Activated naive CD8-positive, alpha-beta T cell treated with anti-CD3 and anti-CD28 coated beads, Interleukin-2, amount 10 ng/mL, durations not matched to agents 7 days and 5 days (primary cell): ENCODE measurements at regions of chr15 and their contacts with region 1.

Region 1: GRCh38 chr15:75201609-75202250 is at the start of gene C15orf39:
- DNase-seq: peak; percentile 93
- ATAC-seq: peak; percentile 44
- H3K4me3 Mint-ChIP-seq: peak within 1 kb of the TSS; percentile 94
- H3K27ac Mint-ChIP-seq: peak within 1 kb of the TSS; percentile 85
- H3K4me1 Mint-ChIP-seq: peaks cover 45% of the 10 kb centered on the region
- H3K27me3 Mint-ChIP-seq: no peaks in the 10 kb centered on the region
- total RNA-seq, gene C15orf39: 45.6 to 45.9 TPM

Region 2: DNA sequence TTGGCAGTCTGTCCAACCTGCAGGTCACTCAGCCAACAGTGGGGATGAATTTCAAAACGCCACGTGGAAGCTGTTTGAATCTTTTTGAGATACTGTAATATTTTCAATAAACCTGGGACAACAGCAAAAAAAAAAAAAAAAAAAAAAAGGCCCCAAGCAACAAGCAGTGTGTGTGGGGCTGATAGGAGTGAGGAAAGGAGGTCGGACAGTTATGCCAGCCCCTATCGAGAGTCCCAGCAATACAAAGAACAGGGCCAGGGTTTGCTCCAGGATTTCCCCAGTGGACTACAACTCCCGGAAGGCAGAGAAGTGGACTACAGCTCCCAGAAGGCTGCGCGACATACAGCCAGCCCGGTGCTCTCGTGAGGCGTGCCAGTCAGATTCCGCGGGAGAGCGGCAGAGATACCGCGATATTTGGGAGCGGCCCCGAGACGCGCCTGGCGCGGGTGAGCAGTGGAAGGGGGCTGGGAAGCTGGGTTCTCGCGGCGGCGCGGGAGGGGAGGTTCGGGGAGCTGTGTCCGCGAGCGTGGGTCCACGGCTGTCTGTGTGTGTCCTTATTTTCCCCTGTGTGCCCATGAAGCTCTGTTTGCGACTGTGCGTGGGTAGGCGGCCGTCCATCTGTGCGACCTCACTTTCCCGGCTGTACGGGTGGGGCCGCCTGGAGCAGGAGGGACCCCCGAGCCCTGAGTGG is 178.4 kb before region 1 on chr15 and contains the start of gene PPCDC:
- POLR2A ChIA-PET with region 1: interaction called, 10 read pairs
- DNase-seq: peak; percentile 94
- ATAC-seq: peak; percentile 99
- H3K4me3 Mint-ChIP-seq: peak within 1 kb of the TSS; percentile 95
- H3K27ac Mint-ChIP-seq: peak within 1 kb of the TSS; percentile 95
- H3K4me1 Mint-ChIP-seq: peaks cover 19% of the 10 kb centered on the region
- H3K27me3 Mint-ChIP-seq: peaks cover 2% of the 10 kb centered on the region
- total RNA-seq, gene PPCDC: 16.0 to 16.7 TPM

Region 3: GRCh38 chr15:75029378-75030022 is 172.2 kb before region 1 on chr15:
- POLR2A ChIA-PET with region 1: interaction called, 13 read pairs
- DNase-seq: peak; percentile 91
- ATAC-seq: peak; percentile 85
- H3K4me3 Mint-ChIP-seq: no peak overlapping the region
- H3K27ac Mint-ChIP-seq: peak overlapping the region; percentile 57
- H3K4me1 Mint-ChIP-seq: peaks cover 37% of the 10 kb centered on the region
- H3K27me3 Mint-ChIP-seq: no peaks in the 10 kb centered on the region

Region 4: GRCh38 chr15:75036314-75036649 is 165.4 kb before region 1 on chr15:
- POLR2A ChIA-PET with region 1: interaction called, 12 read pairs
- DNase-seq: no peak
- ATAC-seq: no peak
- H3K4me3 Mint-ChIP-seq: peak overlapping the region; percentile 33
- H3K27ac Mint-ChIP-seq: peak overlapping the region; percentile 69
- H3K4me1 Mint-ChIP-seq: peaks cover 52% of the 10 kb centered on the region
- H3K27me3 Mint-ChIP-seq: no peaks in the 10 kb centered on the region

Region 5: DNA sequence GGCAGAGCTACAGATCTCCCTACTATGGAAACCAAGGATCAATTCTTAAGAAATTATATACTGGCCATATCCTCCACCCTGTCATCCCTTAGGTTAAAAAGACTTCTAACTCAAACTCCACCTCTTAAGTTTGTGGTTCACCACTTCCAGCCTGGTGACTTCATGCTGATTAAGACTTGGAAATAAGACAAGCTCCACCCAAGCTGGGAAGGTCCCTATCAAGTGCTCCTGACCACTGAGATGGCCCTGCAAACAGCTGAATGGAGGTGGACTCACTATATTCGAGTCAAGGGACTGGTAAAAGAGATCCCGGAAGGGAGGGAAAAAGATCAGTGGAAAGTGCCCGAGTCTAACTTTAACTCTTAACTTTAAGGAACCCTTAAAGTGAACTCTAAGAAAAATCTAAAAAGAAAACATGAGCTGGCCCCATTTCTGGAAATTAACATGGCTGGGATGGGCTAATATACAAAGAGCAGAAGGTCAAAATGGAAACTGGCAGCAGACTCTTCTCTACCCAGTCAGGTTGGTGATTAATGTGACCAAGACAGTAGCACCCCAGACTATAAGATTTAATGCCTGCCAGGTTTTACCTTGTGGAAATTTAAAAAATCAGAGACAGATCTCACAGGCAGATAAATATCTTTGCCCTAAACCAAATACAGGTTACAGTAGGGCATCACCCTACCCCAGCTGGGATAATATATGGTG is 134.5 kb before region 1 on chr15:
- POLR2A ChIA-PET with region 1: interaction called, 25 read pairs
- DNase-seq: no peak
- ATAC-seq: peak; percentile 74
- H3K4me3 Mint-ChIP-seq: peak overlapping the region; percentile 42
- H3K27ac Mint-ChIP-seq: peak overlapping the region; percentile 72
- H3K4me1 Mint-ChIP-seq: peaks cover 39% of the 10 kb centered on the region
- H3K27me3 Mint-ChIP-seq: peaks cover 6% of the 10 kb centered on the region

Region 6: GRCh38 chr15:75107908-75108838 is 93.6 kb before region 1 on chr15:
- POLR2A ChIA-PET with region 1: interaction called, 15 read pairs
- DNase-seq: peak; percentile 74
- ATAC-seq: peak; percentile 81
- H3K4me3 Mint-ChIP-seq: peak overlapping the region; percentile 65
- H3K27ac Mint-ChIP-seq: peak overlapping the region; percentile 77
- H3K4me1 Mint-ChIP-seq: peaks cover 43% of the 10 kb centered on the region
- H3K27me3 Mint-ChIP-seq: peaks cover 9% of the 10 kb centered on the region

Region 7: GRCh38 chr15:75130597-75131268 is 71.0 kb before region 1 on chr15:
- POLR2A ChIA-PET with region 1: interaction called, 44 read pairs
- DNase-seq: no peak
- ATAC-seq: peak; percentile 93
- H3K4me3 Mint-ChIP-seq: peak overlapping the region; percentile 75
- H3K27ac Mint-ChIP-seq: peak overlapping the region; percentile 97
- H3K4me1 Mint-ChIP-seq: peaks cover 37% of the 10 kb centered on the region
- H3K27me3 Mint-ChIP-seq: no peaks in the 10 kb centered on the region

Region 8: DNA sequence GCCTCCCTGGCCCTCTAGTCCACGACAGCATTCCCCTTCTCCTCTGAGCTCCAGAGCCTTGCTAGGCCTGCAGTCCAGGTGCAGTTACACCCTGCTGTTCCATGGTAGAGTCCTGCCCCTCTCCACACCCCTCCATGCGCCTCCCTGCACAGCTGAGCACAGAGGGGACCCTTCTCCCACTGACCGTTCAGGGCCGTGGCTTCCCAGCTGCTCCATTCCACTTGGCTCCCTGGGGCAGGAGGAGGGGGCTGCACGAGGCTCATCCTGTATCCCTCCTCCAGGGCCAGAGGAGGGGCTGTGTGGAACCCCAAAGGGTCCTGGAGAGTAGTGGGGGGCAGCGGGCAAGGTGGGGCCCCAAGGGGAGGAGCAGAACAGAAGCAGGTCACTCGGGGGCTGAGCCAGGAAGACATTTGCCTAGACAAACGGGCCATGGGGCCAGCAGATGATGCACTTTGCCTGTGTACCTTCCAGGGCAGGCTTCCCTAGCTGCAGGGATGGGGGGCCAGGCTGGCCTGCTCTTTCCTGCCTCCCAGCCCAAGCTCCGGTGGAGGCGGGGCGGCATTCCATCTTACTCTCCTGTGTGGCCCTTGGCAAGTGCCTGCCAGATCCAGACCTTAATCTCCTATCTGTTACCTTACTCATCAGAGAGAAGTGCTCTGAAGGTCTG is 35.7 kb after region 1 on chr15:
- POLR2A ChIA-PET with region 1: no interaction called
- DNase-seq: peak; percentile 10
- ATAC-seq: no peak
- H3K4me3 Mint-ChIP-seq: no peak overlapping the region
- H3K27ac Mint-ChIP-seq: no peak overlapping the region
- H3K4me1 Mint-ChIP-seq: no peaks in the 10 kb centered on the region
- H3K27me3 Mint-ChIP-seq: peaks cover 16% of the 10 kb centered on the region